ENCODE measurements at regions of chr5 and their contacts with region 1.

Region 1: GRCh38 chr5:173144200-173145176 is at the start of gene BNIP1:
- DNase-seq: peak; percentile 82
- H3K4me3 ChIP-seq: peak within 1 kb of the TSS; percentile 77 to 99 (median 94)
- H3K27ac ChIP-seq: peak within 1 kb of the TSS; percentile 93 to 97 (median 95)
- H3K4me1 ChIP-seq: peaks cover 0 to 15% (median 4%) of the 10 kb centered on the region in 3 donors
- H3K27me3 ChIP-seq: no peaks in the 10 kb centered on the region
- CTCF ChIP-seq: peak; percentile 85 to 96 (median 92)
- POLR2A ChIP-seq: peak in 3 of 4 donors; percentile 4 to 64 (median 7)
- total RNA-seq, gene BNIP1: 5.2 to 12.4 (median 11.2) TPM

Region 2: GRCh38 chr5:172984243-172984953 is 160.1 kb before region 1 on chr5:
- intact Hi-C with region 1: loop called (anchors 5 kb)
- DNase-seq: peak; percentile 21
- H3K4me3 ChIP-seq: peak overlapping the region; percentile 73 to 98 (median 82)
- H3K27ac ChIP-seq: peak overlapping the region; percentile 92 to 99 (median 96)
- H3K4me1 ChIP-seq: peaks cover 17 to 50% (median 18%) of the 10 kb centered on the region in 3 donors
- H3K27me3 ChIP-seq: no peaks in the 10 kb centered on the region
- CTCF ChIP-seq: peak; percentile 30 to 60 (median 54)
- POLR2A ChIP-seq: no peak

Region 3: DNA sequence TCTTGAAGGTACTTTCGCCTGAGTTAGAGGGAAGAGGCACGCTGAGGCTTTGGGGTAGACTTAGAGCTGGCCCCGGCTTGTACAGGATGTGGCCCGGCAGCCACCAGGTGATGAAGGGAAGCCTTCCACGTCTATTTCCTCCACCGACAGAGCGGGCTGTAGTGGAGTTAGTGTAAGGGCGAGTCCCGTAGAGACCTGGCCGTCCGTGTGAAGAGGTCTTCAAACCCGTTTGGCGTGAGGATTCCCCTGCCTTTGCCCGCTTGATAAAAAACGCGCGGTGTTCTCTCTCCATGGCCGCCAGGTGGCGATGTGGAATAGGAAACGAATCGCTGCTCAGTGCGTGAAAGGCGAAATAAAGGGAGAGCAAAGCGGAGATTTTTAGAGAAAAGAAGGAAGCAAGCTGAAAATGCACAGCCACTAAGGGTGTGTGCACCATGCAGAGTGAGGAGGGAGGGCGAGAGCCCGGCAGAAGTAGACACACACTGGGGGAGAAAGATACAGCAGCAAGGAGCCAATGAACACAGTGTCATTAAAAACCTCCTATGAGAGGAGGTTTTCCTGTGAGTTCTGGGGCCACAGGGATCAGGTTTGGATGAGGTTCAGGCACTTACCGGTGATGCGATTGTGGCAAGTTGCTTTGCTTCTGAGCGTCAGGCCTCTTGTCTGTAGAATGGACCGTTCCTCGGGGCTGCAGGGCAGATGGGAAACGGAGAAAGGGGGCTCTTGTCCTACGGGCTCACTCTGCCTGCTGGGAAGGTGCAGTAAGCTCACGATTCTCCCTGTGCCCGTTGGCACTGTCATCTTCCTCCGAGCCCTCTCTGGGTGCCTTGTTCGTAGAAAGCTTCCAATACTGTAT is 149.6 kb after region 1 on chr5:
- intact Hi-C with region 1: no loop called
- DNase-seq: peak; percentile 9
- H3K4me3 ChIP-seq: peak overlapping the region in 2 of 4 donors; percentile 4 to 5
- H3K27ac ChIP-seq: no peak overlapping the region
- H3K4me1 ChIP-seq: peaks cover 0 to 22% (median 8%) of the 10 kb centered on the region in 3 donors
- H3K27me3 ChIP-seq: peaks cover 0 to 48% (median 1%) of the 10 kb centered on the region in 4 donors
- CTCF ChIP-seq: peak; percentile 79 to 92 (median 89)
- POLR2A ChIP-seq: no peak

Measured in esophagus squamous epithelium (tissue), 5 donors.